IMR-90 (cell line): ENCODE measurements at regions of chr11 and their contacts with region 1.

Region 1: GRCh38 chr11:93169950-93170561 is 27.7 kb downstream of the SLC36A4 start:
- DNase-seq: peak; percentile 62
- ATAC-seq: peak; percentile 65
- H3K4me3 ChIP-seq: no peak overlapping the region
- H3K27ac ChIP-seq: no peak overlapping the region
- H3K4me1 ChIP-seq: no peaks in the 10 kb centered on the region
- H3K27me3 ChIP-seq: no peaks in the 10 kb centered on the region
- CTCF ChIP-seq: peak; percentile 64
- POLR2A ChIP-seq: no peak
- RAD21 ChIP-seq: peak; percentile 73

Region 2: GRCh38 chr11:92948116-92948515 is 221.9 kb before region 1 on chr11:
- CTCF ChIA-PET with region 1: no interaction called
- POLR2A ChIA-PET with region 1: no interaction called
- dilution Hi-C with region 1: no loop called
- in situ Hi-C with region 1: loop called (anchors 5 kb)
- intact Hi-C with region 1: no loop called
- DNase-seq: no peak
- ATAC-seq: no peak
- H3K4me3 ChIP-seq: no peak overlapping the region
- H3K27ac ChIP-seq: no peak overlapping the region
- H3K4me1 ChIP-seq: no peaks in the 10 kb centered on the region
- H3K27me3 ChIP-seq: no peaks in the 10 kb centered on the region
- CTCF ChIP-seq: no peak
- POLR2A ChIP-seq: no peak
- RAD21 ChIP-seq: no peak

Region 3: DNA sequence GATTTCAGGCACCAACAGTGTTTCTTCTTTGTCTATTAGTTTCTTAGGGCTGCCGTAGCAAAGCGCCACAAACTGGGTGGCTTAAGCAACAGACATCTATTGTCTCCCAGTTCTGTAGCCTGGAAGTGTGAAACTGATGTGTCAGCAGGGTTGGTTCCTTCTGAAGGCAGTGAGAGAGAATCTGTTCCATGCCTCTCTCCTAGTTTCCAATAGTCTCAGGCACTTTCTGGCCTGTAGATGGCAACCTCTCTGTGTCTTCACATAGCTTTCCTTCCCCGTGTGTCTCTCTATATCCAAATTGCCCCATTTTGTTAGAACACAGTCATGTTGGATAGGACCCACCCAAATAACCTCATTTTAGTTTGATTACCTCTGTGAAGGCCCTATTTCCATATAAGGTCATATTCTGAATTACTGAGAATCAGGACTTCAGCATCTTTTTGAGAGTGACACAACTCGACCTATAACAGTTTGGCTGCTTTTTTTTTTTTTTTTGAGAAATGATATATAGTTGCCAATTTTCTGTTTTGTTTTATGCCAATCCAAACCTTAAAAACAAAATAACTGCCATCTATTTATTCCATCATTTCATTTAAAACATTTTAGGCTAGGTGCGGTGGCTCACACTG is 80.5 kb before region 1 on chr11:
- CTCF ChIA-PET with region 1: interaction called, 4 read pairs
- POLR2A ChIA-PET with region 1: no interaction called
- dilution Hi-C with region 1: no loop called
- in situ Hi-C with region 1: no loop called
- intact Hi-C with region 1: loop called (anchors 2 kb)
- DNase-seq: peak; percentile 62
- ATAC-seq: peak; percentile 95
- H3K4me3 ChIP-seq: no peak overlapping the region
- H3K27ac ChIP-seq: no peak overlapping the region
- H3K4me1 ChIP-seq: no peaks in the 10 kb centered on the region
- H3K27me3 ChIP-seq: no peaks in the 10 kb centered on the region
- CTCF ChIP-seq: peak; percentile 51
- POLR2A ChIP-seq: no peak
- RAD21 ChIP-seq: peak; percentile 51